A673 (cell line): ENCODE measurements at regions of chr6 and their contacts with region 1.

Region 1: GRCh38 chr6:155188707-155189496 is 74.9 kb upstream of the CLDN20 start:
- DNase-seq: peak; percentile 90
- H3K4me3 ChIP-seq: peak overlapping the region; percentile 17
- H3K27ac ChIP-seq: peak overlapping the region; percentile 7
- H3K4me1 ChIP-seq: peaks cover 44% of the 10 kb centered on the region
- H3K27me3 ChIP-seq: no peaks in the 10 kb centered on the region
- CTCF ChIP-seq: no peak

Region 2: DNA sequence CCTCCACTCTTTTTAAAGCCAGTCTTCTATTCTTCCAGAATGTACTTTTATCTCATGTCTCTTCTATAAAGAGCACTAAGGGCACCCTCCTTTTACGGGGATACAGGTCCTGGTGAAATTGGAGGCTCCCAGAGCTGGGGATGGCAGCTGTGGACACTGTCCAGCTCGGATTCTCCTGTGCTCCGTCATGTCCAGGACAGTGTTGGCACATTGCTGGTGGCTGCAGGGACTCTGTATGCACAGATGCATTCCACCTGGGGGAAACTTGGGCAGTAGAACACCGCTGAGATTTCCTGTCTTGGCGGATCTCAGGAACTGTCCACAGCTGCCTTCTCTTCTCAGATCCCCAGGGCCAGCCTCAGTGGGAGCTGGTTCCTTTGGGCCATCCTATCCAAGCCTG is 18.3 kb after region 1 on chr6:
- CTCF ChIA-PET with region 1: no interaction called
- POLR2A ChIA-PET with region 1: no interaction called
- intact Hi-C with region 1: no loop called
- DNase-seq: no peak
- H3K4me3 ChIP-seq: no peak overlapping the region
- H3K27ac ChIP-seq: no peak overlapping the region
- H3K4me1 ChIP-seq: no peaks in the 10 kb centered on the region
- H3K27me3 ChIP-seq: no peaks in the 10 kb centered on the region
- CTCF ChIP-seq: no peak

Region 3: GRCh38 chr6:155530219-155530834 is 341.4 kb after region 1 on chr6:
- CTCF ChIA-PET with region 1: no interaction called
- POLR2A ChIA-PET with region 1: no interaction called
- intact Hi-C with region 1: loop called (anchors 10 kb)
- DNase-seq: peak; percentile 72
- H3K4me3 ChIP-seq: no peak overlapping the region
- H3K27ac ChIP-seq: no peak overlapping the region
- H3K4me1 ChIP-seq: peaks cover 20% of the 10 kb centered on the region
- H3K27me3 ChIP-seq: no peaks in the 10 kb centered on the region
- CTCF ChIP-seq: peak; percentile 83